HEK293T (cell line): ENCODE measurements at regions of chr14 and their contacts with region 1.

Region 1: DNA sequence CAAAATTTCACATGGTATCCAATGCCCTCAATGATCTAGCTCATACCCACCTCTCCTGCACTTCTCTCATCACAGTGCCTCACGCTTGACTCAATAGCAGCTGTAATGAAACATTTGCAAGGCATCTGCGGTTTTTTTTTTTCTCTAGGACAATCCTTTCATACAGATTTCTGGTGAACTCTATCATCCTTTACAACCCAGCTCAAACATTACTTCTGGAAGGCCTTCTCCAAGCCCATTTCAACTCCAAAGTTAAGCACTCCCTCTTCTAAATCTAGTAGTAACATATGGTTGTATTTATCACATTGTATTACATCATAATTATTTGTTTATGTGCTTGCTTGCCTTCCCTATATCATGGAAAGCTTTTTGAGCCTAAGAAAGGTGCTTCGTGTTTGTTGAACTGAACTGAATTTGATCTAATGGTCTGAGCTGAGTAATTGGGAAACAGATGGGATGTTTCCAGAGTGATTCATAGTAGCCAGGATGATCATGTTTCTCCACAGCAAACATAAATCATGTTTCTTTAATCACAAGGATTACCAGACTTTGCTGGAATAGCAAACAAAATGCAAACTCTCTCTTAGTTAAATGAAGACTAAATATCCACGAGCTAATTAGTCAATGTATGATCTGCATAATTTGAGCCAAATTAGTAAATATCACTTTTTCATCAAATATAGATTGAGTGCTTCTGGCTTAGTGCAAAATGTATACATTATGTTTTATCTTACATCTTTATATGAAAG is 14.3 kb downstream of the CFL2 start:
- DNase-seq: no peak

Region 2: GRCh38 chr14:34714320-34715126 is 14.5 kb after region 1 on chr14 and contains the start of gene CFL2:
- CTCF ChIA-PET with region 1: interaction called, 4 read pairs
- POLR2A ChIA-PET with region 1: interaction called, 18 read pairs
- DNase-seq: peak; percentile 91

Region 3: DNA sequence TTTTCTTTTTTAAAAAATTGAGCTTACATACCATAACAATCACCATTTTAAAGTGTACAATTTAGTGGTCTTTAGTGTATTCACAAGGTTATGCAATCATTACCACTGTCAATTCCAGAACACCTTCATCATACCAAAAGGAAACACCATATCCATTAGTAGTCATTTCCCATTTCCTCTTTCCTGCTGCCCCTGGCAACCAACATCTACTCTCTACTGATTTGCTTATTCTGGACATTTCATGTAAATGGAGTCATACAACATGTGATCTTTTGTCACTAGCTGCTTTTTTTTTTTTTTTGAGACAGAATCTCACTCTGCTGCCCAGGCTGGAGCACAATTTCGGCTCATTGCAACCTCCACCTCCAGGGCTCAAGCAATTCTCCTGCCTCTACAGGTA is 81.2 kb after region 1 on chr14:
- CTCF ChIA-PET with region 1: no interaction called
- POLR2A ChIA-PET with region 1: no interaction called
- DNase-seq: no peak